ENCODE measurements at regions of chr11 and their contacts with region 1.

Region 1: DNA sequence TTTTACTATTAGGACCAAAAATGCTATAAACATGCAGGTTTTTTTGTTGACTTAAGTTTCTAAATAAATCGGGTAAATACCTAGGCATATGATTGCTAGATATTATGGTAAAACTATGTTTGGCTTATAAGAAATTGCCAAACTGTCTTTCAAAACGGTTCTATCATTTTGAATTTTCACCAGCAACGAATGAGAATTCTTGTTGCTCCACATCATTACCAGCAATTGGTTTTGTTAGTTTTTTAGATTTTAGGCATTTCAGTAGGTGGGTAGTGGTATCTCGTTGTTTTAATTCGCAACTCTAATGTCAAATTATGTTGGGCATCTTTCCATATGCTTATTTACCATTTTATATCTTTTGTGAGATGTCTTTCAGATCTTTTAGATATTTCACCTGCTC is 510.2 kb downstream of the JRKL start:
- DNase-seq: no peak
- H3K4me3 ChIP-seq: no peak overlapping the region
- H3K27ac ChIP-seq: no peak overlapping the region
- H3K4me1 ChIP-seq: no peaks in the 10 kb centered on the region
- H3K27me3 ChIP-seq: no peaks in the 10 kb centered on the region
- CTCF ChIP-seq: no peak
- POLR2A ChIP-seq: no peak

Region 2: DNA sequence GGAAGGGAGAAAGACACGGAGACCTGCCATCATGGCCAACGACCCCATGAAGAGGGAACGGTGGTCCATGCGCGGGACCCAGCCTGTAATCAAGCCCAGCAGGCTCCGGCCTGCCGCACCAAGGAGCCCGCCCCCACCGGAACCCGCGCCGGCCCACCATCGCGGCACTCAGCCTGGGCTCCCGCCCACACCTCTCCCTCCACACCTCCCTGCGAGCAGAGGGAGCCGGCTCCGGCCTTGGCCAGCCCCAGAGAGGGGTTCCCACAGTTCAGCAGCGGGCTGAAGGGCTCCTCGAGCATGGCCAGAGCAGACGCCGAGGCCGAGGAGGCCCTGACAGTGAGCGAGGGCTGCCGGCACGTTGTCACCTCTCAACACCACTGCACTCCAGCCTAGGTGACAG is 818.0 kb after region 1 on chr11:
- intact Hi-C with region 1: no loop called
- DNase-seq: no peak
- H3K4me3 ChIP-seq: no peak overlapping the region
- H3K27ac ChIP-seq: no peak overlapping the region
- H3K4me1 ChIP-seq: no peaks in the 10 kb centered on the region
- H3K27me3 ChIP-seq: no peaks in the 10 kb centered on the region
- CTCF ChIP-seq: no peak
- POLR2A ChIP-seq: no peak

Region 3: GRCh38 chr11:98390391-98390790 is 1490.4 kb after region 1 on chr11:
- intact Hi-C with region 1: loop called (anchors 5 kb)
- DNase-seq: no peak
- H3K4me3 ChIP-seq: no peak overlapping the region
- H3K27ac ChIP-seq: no peak overlapping the region
- H3K4me1 ChIP-seq: no peaks in the 10 kb centered on the region
- H3K27me3 ChIP-seq: no peaks in the 10 kb centered on the region
- CTCF ChIP-seq: no peak
- POLR2A ChIP-seq: no peak